AG04449 (cell line): ENCODE measurements at regions of chr16 and their contacts with region 1.

Region 1: DNA sequence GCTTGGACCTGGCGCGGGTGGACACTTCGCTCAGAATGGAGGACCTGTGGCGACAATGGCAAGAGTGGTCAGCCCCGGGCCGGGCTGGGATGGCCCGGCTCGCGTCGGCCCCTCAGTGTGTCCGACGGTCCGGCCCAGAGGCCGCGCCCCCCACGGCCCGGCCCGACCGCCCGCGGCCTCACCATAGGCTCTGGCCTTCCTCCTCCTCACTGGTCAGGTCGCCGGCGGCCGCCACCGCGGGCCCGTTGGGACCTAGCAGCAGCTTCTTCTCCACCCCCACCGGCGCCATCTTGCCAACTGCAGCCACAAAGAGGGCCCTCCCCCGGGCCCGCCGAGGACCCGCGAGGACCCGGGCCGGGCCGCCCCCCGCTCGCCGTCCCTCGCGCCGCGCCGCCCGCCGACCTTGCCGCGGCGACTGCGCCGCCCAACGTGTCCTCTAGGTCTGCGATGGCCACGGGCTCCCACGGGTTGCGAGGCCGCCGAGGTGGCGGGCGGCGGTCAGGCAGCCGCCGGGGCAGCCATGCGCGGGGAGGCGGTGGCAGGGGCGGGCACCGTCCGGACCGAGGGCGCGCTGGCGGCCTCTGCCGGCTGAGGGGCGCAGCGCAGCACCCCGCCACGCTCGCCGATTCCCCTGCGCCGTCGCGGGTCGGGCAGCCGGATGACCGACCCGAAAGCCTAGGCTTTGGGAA is at the start of gene DYNC1LI2:
- DNase-seq: no peak
- H3K4me3 ChIP-seq: peak within 1 kb of the TSS; percentile 93
- CTCF ChIP-seq: peak; percentile 74

Region 2: DNA sequence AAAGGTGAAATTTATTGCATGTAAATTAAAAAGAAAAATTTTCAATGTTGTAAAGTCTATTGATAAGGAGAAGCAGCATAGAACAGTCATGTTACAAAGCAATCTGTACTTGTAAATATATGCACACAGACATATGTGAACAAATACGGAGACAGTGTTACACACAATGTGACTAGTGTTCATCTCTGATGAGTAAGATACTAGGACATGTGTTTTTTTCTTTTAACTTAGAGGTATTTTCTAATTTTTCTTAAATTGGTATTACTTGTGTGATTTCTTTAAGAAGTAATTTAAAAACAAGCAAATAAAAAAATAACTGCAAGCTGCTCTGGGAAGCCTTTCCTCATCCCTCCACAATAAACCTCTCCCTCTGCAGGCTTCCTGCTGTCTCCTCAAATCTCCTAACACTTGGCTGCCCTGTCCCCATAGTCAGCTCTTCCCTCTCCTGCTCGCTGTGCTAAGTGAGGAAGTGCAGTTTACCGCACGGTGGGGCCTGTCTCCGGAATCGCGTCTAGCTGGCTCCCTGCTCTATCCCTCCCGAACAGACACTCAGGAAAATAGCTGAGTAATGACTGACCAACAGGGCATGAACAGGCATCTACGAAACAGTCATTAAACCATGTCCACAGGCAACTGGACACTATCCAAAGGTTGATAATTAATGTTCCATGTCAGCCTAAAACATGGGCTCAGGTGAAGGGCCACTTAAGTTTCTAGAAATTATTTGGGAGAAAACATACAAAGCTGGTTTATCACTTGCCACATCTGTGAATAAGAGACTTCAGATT is 90.8 kb before region 1 on chr16:
- CTCF ChIA-PET with region 1: interaction called, 25 read pairs
- POLR2A ChIA-PET with region 1: no interaction called
- DNase-seq: no peak
- H3K4me3 ChIP-seq: no peak overlapping the region
- CTCF ChIP-seq: peak; percentile 53

Region 3: DNA sequence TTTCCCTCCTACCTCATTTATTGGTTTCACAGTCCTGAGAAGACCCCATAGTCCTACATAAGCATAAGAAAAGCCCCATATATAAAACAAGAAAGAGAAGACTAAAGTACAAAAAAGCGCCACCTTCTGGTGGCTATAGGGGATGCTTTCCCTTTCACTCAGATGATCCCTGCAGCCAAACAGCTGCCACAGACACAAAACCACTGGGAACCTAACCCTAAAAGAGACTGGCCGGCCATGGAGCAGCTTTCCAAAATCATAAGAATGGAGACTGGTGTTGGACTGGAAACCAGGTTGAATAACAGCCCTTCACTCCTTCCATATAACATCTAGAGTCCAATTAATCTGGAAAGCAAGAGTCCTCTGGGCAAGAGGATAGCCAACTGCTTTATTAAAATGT is 11.4 kb before region 1 on chr16:
- CTCF ChIA-PET with region 1: interaction called, 501 read pairs
- POLR2A ChIA-PET with region 1: interaction called, 11 read pairs
- DNase-seq: no peak
- H3K4me3 ChIP-seq: no peak overlapping the region
- CTCF ChIP-seq: peak; percentile 44

Region 4: DNA sequence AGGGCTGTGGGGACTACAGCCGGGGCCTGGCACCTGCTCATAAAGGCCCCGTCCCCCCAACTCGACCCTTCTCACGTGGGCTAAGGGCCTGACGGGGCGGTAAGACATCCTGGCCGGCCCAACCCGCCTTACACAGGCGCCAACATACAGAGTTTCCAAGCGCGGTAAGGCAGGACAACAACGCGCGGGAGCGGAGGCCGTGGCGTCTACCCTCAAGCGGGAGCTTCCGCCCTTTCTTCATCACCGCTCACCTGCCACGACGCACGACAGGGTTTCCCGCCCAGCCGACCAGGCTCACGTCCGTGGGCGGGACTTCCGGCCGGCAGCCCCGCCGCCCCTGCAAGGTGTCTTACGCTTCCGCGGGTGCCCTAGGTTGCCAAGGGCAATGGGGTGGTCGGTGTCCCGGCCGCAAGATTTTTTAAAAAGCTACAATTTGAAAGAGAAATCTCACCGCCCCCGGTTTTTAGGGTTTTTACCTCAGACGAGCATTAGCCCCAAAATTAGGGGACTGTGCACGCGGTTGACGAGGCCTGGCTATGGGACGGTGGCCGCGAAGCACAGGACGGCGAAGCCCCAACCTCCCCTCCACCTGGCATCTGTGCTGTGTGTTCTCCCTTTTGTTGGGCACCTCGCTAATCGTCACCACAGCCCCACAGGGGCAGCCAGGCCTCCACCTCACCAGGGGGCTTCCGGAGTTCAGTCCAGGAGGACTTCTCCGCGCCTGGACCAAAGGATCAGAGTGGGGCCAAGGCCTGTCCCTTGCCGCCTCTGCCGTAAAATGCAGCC is 50.1 kb after region 1 on chr16 and contains the start of gene TERB1:
- CTCF ChIA-PET with region 1: interaction called, 11 read pairs
- POLR2A ChIA-PET with region 1: no interaction called
- DNase-seq: no peak
- H3K4me3 ChIP-seq: no peak within 1 kb of the TSS
- CTCF ChIP-seq: no peak

Region 5: DNA sequence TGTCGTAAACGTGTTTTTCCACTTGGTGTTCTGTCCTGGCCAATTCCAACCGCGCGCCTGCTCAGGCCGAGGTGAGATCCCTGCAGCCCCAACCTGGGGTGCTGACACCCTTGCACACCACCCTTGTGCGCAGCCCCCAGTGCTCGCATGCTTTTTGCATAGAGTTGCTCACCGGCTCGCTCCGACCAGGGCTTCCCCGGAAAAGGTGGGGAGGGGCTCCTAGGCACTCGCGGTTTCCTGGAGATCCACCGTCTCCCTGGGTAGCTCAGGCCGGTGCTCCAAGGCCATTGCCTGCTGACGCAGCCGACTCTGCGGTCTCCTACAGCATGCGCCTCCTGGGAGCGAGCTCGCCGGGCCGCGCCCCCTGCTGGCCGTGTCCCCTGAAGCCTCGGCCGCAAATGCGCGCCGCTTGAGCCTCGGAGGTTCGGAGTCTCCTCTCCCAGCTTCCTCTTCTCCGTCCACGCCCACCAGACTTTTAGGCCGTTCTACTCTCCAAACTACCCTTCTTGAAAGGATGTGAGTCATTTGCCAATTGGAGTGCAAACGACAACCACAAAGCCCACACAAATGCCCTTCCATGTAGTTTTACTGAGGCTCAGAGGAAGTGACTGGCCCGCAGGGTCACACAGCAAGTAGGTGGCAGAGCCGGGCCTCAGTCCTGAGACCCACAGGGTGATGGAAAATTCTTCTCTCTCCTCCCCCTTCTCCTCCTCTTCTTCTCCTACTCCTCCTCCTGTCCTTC is 121.7 kb after region 1 on chr16:
- CTCF ChIA-PET with region 1: interaction called, 12 read pairs
- POLR2A ChIA-PET with region 1: no interaction called
- DNase-seq: peak; percentile 95
- H3K4me3 ChIP-seq: peak overlapping the region; percentile 51
- CTCF ChIP-seq: peak; percentile 99

Region 6: GRCh38 chr16:67040906-67041305 is 289.5 kb after region 1 on chr16:
- CTCF ChIA-PET with region 1: no interaction called
- POLR2A ChIA-PET with region 1: no interaction called
- DNase-seq: no peak
- H3K4me3 ChIP-seq: no peak overlapping the region
- CTCF ChIP-seq: no peak